Endothelial cell of umbilical vein (primary cell): ENCODE measurements at regions of chr20 and their contacts with region 1.

Region 1: DNA sequence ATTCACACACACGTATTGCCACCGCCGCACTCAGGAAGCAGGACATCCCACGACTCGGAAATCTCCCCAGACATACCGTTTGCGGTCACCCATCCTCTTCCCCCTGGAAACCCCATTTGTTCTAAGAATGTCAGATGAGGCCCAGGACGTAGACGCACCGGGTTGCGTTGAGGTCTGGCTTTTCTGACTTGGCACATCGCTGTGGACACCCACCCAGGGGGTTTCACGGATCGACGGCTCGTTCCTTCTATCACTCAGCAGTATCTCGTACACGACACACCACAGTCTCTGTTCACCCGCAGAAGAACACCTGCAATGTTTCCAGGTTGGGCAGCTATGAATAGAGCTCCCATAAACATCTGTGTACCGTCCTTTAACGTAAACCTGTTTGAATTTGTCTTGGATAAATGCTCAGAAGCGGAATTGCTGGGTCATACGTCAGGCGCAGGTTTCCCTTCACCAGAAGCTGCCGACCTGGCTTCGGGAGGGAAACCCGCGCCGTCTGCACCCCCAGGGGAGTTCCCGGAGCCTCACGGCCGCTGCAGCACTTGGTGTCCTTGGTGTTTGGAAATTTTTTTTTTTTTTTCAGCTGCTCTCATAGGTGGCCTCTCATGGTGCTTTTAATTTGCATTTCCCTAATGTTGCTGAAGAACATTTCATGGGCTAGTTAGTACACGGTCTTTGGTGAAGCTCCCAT is 9.3 kb upstream of the EEF1A2 start:
- DNase-seq: no peak
- H3K4me3 ChIP-seq: no peak overlapping the region
- H3K27ac ChIP-seq: no peak overlapping the region
- H3K4me1 ChIP-seq: no peaks in the 10 kb centered on the region
- H3K27me3 ChIP-seq: peaks cover 0 to 2% of the 10 kb centered on the region in 2 experiments
- CTCF ChIP-seq: no peak
- POLR2A ChIP-seq: no peak

Region 2: DNA sequence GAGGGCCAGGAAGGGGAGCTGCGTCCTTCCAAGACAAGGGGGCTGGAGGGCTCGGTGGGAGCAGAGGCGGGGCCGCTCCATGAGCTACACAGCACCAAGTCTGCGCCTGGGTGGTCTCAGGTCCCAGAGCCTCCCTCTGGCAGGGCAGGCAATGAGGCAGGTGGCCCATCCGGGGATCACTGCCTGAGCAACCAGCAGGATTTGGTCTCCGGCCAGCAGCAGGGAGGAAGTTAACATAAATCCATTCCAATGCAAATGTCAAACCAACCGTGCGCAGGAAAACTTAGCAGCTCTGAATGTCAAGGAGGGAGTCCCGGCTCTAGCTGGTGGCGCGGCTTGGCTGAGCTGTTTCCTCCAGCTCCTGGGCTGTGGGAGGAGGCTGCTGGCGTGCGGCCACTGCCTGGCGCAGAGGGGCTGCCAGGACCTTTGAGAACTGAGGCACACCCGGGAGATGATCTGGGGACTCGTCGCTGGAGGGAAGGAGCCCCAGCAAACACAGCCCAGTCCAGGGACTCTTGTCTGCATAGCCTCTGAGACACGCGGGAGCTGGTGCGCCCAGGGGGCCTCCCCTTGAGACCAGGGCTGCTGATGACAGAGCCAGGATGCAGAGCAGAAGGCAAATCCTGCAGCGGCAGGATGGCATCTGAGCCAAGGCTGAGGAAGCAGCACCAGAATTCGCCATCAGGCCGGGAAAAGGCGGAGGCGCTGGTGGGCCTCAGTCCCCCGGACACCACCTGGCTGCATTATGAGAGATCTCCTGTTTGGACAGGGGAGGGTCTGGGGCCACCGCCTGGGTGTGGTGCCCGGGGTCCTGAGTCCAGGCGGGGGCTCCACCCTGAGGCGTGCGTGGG is 113.9 kb before region 1 on chr20:
- CTCF ChIA-PET with region 1: no interaction called
- POLR2A ChIA-PET with region 1: no interaction called
- dilution Hi-C with region 1: no loop called
- intact Hi-C with region 1: no loop called
- DNase-seq: no peak
- H3K4me3 ChIP-seq: no peak overlapping the region
- H3K27ac ChIP-seq: no peak overlapping the region
- H3K4me1 ChIP-seq: no peaks in the 10 kb centered on the region
- H3K27me3 ChIP-seq: no peaks in the 10 kb centered on the region
- CTCF ChIP-seq: no peak
- POLR2A ChIP-seq: no peak

Region 3: DNA sequence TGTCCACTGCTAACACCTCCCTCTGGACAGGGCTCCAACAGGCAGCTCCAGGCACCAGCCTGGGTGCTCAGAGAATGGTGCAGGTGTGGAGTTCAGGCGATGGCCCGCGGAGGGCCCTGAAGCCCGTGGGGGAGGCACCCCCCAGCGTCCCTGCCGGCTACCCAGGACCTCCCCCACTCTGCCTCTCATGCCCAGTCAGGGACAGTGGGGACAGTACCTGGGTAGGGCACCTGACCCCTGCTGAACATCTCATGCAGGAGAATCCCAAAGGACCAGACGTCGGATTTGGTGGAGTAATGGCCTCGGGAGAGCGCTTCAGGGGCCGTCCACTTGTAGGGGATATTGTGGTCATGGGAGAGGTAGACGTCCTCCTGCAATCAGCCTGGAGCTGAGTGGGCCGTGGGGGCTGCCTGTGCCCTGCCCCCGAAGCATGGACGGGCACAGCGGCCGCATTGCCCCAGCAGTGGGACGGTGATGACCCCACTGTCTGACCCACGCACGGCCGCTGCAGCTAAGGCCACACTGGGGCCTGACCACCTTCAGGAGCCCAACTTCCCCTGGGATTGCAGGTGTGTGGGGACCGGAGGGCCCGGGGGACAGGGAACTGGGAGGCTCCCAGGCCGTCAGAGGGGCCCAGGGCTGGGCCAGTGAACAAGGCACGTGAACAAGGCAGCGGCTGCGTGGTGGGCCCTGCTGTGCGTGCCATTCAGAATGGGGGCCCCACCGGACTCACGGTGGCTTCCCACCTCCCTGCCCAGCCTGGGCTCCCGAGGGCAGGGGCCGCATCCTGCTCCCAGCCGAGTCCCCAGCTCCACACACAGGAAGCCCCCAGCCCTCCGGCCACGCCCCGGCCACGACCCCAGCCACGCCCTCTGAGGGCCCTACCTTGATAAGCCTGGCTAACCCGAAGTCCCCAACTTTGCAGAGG is 21.9 kb after region 1 on chr20:
- CTCF ChIA-PET with region 1: no interaction called
- POLR2A ChIA-PET with region 1: no interaction called
- dilution Hi-C with region 1: no loop called
- intact Hi-C with region 1: no loop called
- DNase-seq: no peak
- H3K4me3 ChIP-seq: no peak overlapping the region
- H3K27ac ChIP-seq: no peak overlapping the region
- H3K4me1 ChIP-seq: no peaks in the 10 kb centered on the region
- H3K27me3 ChIP-seq: no peaks in the 10 kb centered on the region
- CTCF ChIP-seq: no peak
- POLR2A ChIP-seq: no peak

Region 4: GRCh38 chr20:63718996-63719395 is 210.8 kb after region 1 on chr20:
- CTCF ChIA-PET with region 1: no interaction called
- POLR2A ChIA-PET with region 1: interaction called, 11 read pairs
- dilution Hi-C with region 1: no loop called
- intact Hi-C with region 1: no loop called
- DNase-seq: no peak
- H3K4me3 ChIP-seq: no peak overlapping the region
- H3K27ac ChIP-seq: no peak overlapping the region
- H3K4me1 ChIP-seq: no peaks in the 10 kb centered on the region
- H3K27me3 ChIP-seq: no peaks in the 10 kb centered on the region
- CTCF ChIP-seq: no peak
- POLR2A ChIP-seq: no peak